ENCODE measurements at regions of chr3 and their contacts with region 1.

Region 1: DNA sequence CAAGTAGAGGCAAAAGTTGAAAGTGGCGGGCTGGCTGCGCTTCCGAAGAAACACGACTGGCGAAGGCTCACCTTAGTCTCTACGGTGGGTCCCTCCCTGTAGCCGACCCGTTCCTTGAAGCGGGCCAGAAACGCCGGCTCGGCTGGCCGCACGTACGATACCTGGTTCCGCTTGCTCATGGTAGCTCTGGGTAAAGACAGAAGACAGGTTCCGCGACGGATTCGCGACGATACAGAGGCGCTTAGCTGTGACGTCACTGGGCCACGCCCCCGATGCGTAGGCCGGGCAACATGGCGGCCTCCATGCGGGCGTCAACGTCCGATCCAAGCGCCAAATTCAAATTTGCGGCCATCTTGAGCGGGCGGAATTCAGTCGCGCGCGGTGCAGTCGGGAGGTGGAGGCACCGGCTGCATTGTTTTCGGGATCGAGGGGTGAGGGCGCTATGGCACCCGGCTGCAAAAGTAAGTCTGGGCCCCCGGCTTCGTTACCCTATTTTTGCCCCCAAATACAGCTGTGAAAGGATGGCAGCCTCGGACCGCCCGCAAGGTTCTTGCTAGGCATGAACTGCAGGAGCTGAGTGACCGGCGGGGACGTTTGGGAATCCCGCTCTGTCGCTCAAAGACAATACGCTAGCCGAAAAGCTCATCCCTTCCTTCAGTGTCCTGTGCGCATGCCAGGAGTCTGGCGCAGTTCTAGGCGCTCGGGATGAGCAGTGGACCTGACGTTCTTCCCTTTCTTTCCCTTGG is at the starts of genes KIAA1143 and KIF15:
- DNase-seq: peak; percentile 90
- H3K4me3 ChIP-seq: peak within 1 kb of the TSS; percentile 76
- CTCF ChIP-seq: no peak

Region 2: DNA sequence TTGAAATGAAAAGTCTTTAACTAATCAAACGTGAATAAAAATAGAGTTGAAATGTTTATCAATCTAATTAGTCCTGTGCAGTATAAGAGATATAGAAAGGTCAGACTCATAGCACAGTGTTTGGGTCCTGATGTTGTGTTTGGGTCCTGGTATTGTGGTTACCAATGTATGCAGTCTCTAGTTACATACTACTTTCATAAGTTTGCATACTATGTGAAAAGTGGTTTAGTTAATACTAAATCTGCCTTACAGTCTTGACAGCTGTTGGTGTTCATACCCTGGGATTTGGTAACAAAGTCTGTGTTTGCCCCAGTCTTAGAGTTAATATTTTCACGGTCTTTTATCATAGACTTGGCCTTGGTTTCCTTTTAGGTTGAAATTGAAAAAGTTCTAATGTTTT is 41.7 kb after region 1 on chr3:
- in situ Hi-C with region 1: loop called (anchors 5 kb)
- DNase-seq: no peak
- H3K4me3 ChIP-seq: no peak overlapping the region
- CTCF ChIP-seq: no peak